ENCODE measurements at regions of chr10 and their contacts with region 1.

Region 1: GRCh38 chr10:102835007-102835482 is 2.2 kb downstream of the CYP17A1 start:
- DNase-seq: peak; percentile 70 to 75 (median 74)
- ATAC-seq: peak; percentile 76 to 94 (median 92)
- H3K4me3 ChIP-seq: no peak overlapping the region
- H3K27ac ChIP-seq: no peak overlapping the region
- H3K4me1 ChIP-seq: peaks cover 0 to 14% (median 0%) of the 10 kb centered on the region in 12 donors
- H3K27me3 ChIP-seq: no peaks in the 10 kb centered on the region
- CTCF ChIP-seq: peak; percentile 81 to 92 (median 86)
- POLR2A ChIP-seq: no peak

Region 2: GRCh38 chr10:102729029-102730026 is 105.7 kb before region 1 on chr10:
- intact Hi-C with region 1: loop called in 5 of 10 experiments (anchors 1 to 10 kb)
- DNase-seq: peak; percentile 85 to 94 (median 88)
- ATAC-seq: peak; percentile 92 to 97 (median 95)
- H3K4me3 ChIP-seq: peak overlapping the region in 1 of 12 donors; percentile 8
- H3K27ac ChIP-seq: no peak overlapping the region
- H3K4me1 ChIP-seq: peaks cover 0 to 20% (median 6%) of the 10 kb centered on the region in 12 donors
- H3K27me3 ChIP-seq: no peaks in the 10 kb centered on the region
- CTCF ChIP-seq: peak; percentile 88 to 97 (median 93)
- POLR2A ChIP-seq: no peak

Region 3: DNA sequence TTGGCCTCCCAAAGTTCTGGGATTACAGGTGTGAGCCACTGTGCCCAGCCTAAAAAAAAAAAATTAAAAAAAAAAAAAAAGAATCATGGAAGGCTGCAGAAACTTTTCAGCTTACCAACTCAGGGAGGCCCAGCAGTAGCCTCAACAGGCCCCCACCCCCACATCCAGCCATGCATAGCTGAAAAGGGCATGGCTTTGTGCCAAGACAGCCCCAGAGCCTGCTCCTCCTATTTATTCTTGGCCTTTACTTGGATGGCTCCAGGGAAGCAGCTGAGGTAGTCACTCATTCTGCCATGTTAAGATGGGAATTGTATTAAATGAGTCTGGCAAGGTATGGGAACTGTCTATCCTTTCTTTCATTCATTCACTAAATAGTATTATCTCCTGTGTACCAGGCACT is 69.3 kb after region 1 on chr10:
- intact Hi-C with region 1: loop called (anchors 1 to 5 kb)
- DNase-seq: peak in 1 of 5 donors; percentile 41
- ATAC-seq: peak in 2 of 4 donors; percentile 11 to 50
- H3K4me3 ChIP-seq: no peak overlapping the region
- H3K27ac ChIP-seq: no peak overlapping the region
- H3K4me1 ChIP-seq: no peaks in the 10 kb centered on the region
- H3K27me3 ChIP-seq: no peaks in the 10 kb centered on the region
- CTCF ChIP-seq: no peak
- POLR2A ChIP-seq: no peak

Region 4: DNA sequence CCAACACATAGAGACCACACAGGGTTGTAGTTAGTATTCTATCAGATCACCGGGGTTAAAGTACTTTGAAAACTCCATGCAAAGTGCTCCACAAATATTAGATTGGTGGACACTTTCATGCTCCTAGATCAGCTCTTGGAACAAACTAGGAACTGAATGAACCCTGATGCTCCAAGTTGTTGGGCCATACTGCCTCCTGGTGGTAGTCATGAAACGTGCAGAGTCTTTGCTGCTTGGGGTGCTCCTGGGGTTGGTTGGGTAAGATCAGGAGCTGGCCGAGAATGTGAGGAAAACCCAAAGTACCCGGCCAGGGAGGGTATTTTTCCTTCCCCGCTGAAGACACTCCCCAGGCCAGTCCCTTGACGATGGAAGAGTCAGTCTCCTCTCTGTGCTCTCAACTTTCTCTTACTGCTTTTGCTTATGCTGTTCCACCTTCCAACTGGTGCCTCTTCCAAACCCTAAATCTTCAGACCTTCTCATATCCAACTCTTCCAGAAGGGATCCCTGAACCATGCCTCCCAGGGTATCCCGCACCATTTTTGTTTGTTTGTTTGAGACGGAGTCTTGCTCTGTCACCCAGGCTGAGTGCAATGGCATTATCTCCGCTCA is 409.7 kb after region 1 on chr10:
- intact Hi-C with region 1: loop called in 7 of 10 experiments (anchors 2 to 10 kb)
- DNase-seq: peak in 4 of 5 donors; percentile 67 to 73 (median 71)
- ATAC-seq: peak; percentile 76 to 93 (median 88)
- H3K4me3 ChIP-seq: no peak overlapping the region
- H3K27ac ChIP-seq: no peak overlapping the region
- H3K4me1 ChIP-seq: peaks cover 0 to 25% (median 5%) of the 10 kb centered on the region in 12 donors
- H3K27me3 ChIP-seq: no peaks in the 10 kb centered on the region
- CTCF ChIP-seq: peak; percentile 79 to 92 (median 86)
- POLR2A ChIP-seq: no peak

Region 5: GRCh38 chr10:103350501-103351260 is 515.6 kb after region 1 on chr10 and contains the start of gene PCGF6:
- intact Hi-C with region 1: loop called in 1 of 10 experiments (anchors 10 kb)
- DNase-seq: peak; percentile 82 to 92 (median 84)
- ATAC-seq: peak; percentile 62 to 98 (median 96)
- H3K4me3 ChIP-seq: peak within 1 kb of the TSS; percentile 54 to 91 (median 78)
- H3K27ac ChIP-seq: peak within 1 kb of the TSS; percentile 33 to 87 (median 77)
- H3K4me1 ChIP-seq: peaks cover 0 to 14% (median 6%) of the 10 kb centered on the region in 12 donors
- H3K27me3 ChIP-seq: no peaks in the 10 kb centered on the region
- CTCF ChIP-seq: peak in 4 of 12 donors; percentile 10 to 39 (median 23)
- POLR2A ChIP-seq: peak in 1 of 2 donors; percentile 25
- total RNA-seq, gene PCGF6: 5.3 to 8.1 (median 6.6) TPM

Measured in heart left ventricle (tissue), 16 donors.